Left cardiac atrium (tissue), 4 donors: ENCODE measurements at regions of chr22 and their contacts with region 1.

Region 1: DNA sequence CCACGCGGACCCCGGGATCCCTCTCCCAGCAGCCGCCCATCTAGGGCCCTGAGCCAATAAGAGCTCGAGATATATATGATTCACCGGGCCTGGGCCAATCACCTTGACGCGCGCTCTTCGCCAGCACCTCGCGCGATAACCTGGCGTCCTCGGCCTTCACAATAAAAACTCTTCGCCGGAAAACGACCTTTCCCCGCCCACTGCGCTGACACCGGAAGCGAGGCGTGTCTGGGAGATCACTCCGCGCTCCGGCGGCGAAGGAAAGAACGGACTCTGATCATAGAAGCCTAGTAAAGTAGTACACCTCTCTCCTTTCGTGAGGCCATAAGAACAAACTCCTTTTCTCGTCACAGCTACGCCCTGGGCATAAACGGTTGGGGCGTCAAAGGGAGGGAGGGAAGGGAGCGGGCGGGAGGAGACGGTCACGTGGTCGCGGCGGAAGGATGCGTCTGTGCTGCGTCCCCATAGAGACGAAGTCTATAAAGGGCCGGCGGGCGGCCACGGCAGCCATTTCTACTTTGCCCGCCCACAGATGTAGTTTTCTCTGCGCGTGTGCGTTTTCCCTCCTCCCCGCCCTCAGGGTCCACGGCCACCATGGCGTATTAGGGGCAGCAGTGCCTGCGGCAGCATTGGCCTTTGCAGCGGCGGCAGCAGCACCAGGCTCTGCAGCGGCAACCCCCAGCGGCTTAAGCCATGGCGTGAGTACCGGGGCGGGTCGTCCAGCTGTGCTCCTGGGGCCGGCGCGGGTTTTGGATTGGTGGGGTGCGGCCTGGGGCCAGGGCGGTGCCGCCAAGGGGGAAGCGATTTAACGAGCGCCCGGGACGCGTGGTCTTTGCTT is at the start of gene ATF4:
- DNase-seq: peak; percentile 99
- ATAC-seq: peak; percentile 87 to 88
- total RNA-seq, gene ATF4: 203 to 294 TPM

Region 2: DNA sequence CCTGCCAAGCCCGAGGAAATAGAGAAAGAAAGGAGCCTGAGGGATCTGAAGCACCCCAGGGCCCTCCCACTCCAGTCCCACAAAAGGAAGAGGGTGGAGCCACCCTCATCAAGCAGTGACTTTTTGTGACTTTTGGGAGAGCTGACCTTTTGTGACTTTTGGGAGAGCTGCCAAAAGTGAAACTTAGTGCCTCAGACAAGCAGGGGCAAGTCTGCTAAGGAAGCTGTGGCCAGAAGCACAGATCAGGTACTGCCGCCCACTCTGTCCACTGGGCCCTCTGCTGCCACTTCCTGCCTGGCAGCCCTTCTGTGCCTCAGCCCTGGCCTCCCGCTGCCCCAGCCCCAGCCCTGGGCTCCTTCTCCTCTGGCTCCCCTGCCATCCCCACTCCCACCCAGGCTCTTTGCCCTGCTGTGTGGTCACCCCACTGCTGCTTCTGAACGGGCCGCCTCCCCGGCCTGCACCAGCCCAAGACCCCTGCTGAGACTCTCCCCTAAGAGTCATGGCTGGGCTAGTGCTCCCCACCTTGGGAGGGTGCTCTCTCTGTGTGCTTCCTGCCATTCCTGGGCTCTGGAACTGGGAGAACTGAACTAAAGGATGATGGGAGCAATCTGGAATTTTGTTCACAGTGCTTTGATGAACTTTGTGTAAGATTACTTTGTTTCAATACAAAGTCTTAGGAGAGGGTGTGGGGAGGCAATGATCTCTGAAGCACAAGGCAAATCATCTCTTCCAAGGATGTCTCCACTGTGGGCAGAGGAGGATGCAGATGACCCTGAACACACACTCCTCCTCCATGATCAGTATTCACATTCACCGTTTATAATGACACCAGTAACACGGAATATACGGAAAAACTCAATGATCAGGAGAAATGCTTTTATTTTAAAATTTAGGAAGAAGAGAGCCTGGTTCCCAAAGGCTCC is 422.9 kb before region 1 on chr22 and contains the start of gene APOBEC3H:
- intact Hi-C with region 1: no loop called
- DNase-seq: no peak
- ATAC-seq: peak; percentile 28 to 58
- total RNA-seq, gene APOBEC3H: 0.35 TPM in 1 of 2 donors, not detected in the other

Region 3: DNA sequence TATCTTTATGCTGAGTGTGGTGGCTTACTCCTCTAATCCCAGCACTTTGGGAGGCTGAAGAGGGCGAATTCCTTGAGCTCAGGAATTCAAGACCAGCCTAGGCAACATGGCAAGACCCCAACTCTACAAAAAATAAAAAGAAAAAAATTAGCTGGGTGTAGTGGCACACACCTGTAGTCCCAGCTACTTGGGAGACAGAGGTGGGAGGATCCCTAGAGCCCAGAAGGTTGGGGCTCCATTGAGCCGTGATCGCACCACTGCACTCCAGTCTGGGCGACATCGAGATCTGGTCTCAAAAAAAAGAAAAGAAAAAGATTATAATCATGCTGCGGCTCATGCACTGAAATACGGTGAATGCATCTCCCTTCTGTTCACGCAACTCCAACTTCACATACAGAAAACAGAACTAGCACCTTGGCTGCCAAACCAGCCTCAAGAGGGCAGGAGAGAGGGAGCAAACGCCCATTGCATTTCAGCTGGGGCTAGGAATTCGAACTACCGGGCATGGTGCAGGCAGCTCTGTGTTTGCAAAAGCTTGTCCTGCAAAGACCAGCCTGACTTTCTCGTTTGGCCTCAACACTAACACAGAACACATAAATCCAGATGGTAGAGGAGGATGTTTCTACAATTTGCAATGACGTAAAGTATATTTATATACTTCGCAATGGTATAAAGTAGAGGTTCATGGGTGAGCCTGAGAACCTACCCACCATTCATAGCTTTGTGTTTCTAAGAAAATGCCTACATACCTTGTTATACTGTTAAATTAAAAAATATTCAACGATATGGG is 176.8 kb before region 1 on chr22:
- intact Hi-C with region 1: loop called in 1 of 2 experiments (anchors 5 kb)
- DNase-seq: peak; percentile 53
- ATAC-seq: peak; percentile 82

Region 4: GRCh38 chr22:39405346-39406085 is 114.8 kb before region 1 on chr22:
- intact Hi-C with region 1: no loop called
- DNase-seq: peak; percentile 58
- ATAC-seq: peak; percentile 80 to 86